AG04450 (cell line): ENCODE measurements at regions of chr3 and their contacts with region 1.

Region 1: GRCh38 chr3:184371570-184372018 is 6.4 kb downstream of the THPO start:
- DNase-seq: peak; percentile 72
- H3K4me3 ChIP-seq: no peak overlapping the region
- H3K27ac ChIP-seq: no peak overlapping the region
- H3K27me3 ChIP-seq: peaks cover 28% of the 10 kb centered on the region
- CTCF ChIP-seq: peak; percentile 100

Region 2: GRCh38 chr3:184250167-184250828 is 121.3 kb before region 1 on chr3:
- CTCF ChIA-PET with region 1: no interaction called
- POLR2A ChIA-PET with region 1: no interaction called
- DNase-seq: peak; percentile 61
- H3K4me3 ChIP-seq: peak overlapping the region; percentile 88
- H3K27ac ChIP-seq: peak overlapping the region; percentile 68
- H3K27me3 ChIP-seq: no peaks in the 10 kb centered on the region
- CTCF ChIP-seq: peak; percentile 97

Region 3: GRCh38 chr3:184354121-184354728 is 17.4 kb before region 1 on chr3:
- CTCF ChIA-PET with region 1: interaction called, 11 read pairs
- POLR2A ChIA-PET with region 1: interaction called, 4 read pairs
- DNase-seq: no peak
- H3K4me3 ChIP-seq: no peak overlapping the region
- H3K27ac ChIP-seq: no peak overlapping the region
- H3K27me3 ChIP-seq: no peaks in the 10 kb centered on the region
- CTCF ChIP-seq: peak; percentile 69

Region 4: GRCh38 chr3:184423561-184423960 is 52.0 kb after region 1 on chr3:
- CTCF ChIA-PET with region 1: interaction called, 11 read pairs
- POLR2A ChIA-PET with region 1: no interaction called
- DNase-seq: no peak
- H3K4me3 ChIP-seq: no peak overlapping the region
- H3K27ac ChIP-seq: no peak overlapping the region
- H3K27me3 ChIP-seq: peaks cover 12% of the 10 kb centered on the region
- CTCF ChIP-seq: no peak

Region 5: DNA sequence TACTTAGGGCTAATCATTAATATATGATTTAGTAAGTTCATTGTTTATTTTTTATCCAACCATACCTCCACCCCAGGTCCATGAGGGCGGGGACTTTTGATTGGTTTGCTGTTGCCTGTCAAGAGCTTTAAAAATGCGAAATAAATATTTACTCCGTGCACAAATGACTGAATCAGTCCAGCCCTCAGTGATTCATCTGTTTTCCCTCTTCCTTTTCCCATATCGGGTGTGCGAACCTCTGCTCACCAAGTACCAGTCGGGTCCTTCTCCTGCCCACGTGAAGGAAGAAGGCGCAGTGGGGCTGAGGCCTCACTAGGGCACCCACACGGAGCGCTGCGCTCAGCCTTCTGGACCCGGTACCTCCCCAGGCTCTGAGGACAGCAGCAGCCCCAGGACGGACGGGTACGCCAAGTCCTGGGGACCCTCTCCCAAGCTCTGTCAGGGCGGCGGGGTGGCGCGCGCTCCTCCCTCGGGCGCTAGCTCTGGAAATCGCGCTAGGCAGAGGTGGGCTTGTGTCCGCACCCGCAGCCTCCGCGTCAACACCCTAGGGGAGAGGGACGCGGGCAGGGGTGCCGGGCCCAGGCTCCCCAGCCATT is 119.5 kb after region 1 on chr3:
- CTCF ChIA-PET with region 1: interaction called, 14 read pairs
- POLR2A ChIA-PET with region 1: no interaction called
- DNase-seq: no peak
- H3K4me3 ChIP-seq: no peak overlapping the region
- H3K27ac ChIP-seq: no peak overlapping the region
- H3K27me3 ChIP-seq: peaks cover 64% of the 10 kb centered on the region
- CTCF ChIP-seq: no peak

Region 6: GRCh38 chr3:184523825-184524615 is 152.4 kb after region 1 on chr3:
- CTCF ChIA-PET with region 1: interaction called, 21 read pairs
- POLR2A ChIA-PET with region 1: no interaction called
- DNase-seq: no peak
- H3K4me3 ChIP-seq: no peak overlapping the region
- H3K27ac ChIP-seq: no peak overlapping the region
- H3K27me3 ChIP-seq: peaks cover 35% of the 10 kb centered on the region
- CTCF ChIP-seq: no peak

Region 7: GRCh38 chr3:184561061-184561912 is 189.7 kb after region 1 on chr3 and contains the start of gene EPHB3:
- CTCF ChIA-PET with region 1: interaction called, 12 read pairs
- POLR2A ChIA-PET with region 1: no interaction called
- DNase-seq: peak; percentile 99
- H3K4me3 ChIP-seq: peak within 1 kb of the TSS; percentile 67
- H3K27ac ChIP-seq: no peak within 1 kb of the TSS
- H3K27me3 ChIP-seq: peaks cover 32% of the 10 kb centered on the region
- CTCF ChIP-seq: peak; percentile 100
- polyA plus RNA-seq, gene EPHB3: 1.9 TPM in 2 replicates